ENCODE measurements at regions of chr17 and their contacts with region 1.

Region 1: DNA sequence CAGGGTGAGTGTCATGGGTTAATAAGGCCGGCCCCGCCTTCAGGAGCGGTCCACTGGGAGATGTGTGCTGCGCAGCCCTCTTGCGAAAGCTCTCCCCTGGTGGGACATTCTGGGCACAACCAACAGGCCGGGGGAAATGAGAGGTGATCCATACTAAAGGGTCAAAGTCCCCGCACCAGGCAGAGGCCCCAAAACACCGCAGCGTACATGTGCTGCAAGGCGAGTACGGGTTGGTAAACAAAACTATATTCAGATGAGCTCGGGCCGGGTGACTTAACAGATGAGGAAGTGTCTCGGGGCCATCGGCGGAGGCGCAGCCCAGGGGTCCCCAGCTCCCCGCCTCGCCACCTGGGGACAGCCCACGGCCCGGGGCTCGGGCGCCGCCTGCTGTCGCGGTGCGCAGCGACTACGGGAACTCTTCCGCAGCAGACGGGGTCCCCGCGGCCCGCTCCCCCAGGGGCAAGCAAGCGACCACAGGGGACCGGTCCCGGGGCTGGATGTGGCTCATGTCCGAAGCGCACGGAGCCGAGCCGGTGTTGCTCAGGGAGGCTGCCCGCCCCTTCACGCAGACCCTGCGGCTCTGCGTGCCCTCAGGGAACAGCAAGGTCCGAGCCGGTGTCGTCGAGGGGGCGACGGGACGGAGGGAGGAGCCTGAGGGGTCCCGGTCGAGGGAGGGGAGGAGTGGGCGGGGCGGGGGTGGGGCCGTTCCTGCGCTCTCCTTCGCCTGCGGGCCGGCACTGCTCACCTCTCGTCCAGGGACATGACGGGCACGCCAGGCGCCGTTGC is at the start of gene RAB37:
- DNase-seq: peak; percentile 82
- ATAC-seq: peak; percentile 80
- total RNA-seq, gene RAB37: 2.6 TPM

Region 2: GRCh38 chr17:74659898-74660297 is 76.8 kb before region 1 on chr17:
- intact Hi-C with region 1: loop called (anchors 5 kb)
- DNase-seq: no peak
- ATAC-seq: no peak

Region 3: DNA sequence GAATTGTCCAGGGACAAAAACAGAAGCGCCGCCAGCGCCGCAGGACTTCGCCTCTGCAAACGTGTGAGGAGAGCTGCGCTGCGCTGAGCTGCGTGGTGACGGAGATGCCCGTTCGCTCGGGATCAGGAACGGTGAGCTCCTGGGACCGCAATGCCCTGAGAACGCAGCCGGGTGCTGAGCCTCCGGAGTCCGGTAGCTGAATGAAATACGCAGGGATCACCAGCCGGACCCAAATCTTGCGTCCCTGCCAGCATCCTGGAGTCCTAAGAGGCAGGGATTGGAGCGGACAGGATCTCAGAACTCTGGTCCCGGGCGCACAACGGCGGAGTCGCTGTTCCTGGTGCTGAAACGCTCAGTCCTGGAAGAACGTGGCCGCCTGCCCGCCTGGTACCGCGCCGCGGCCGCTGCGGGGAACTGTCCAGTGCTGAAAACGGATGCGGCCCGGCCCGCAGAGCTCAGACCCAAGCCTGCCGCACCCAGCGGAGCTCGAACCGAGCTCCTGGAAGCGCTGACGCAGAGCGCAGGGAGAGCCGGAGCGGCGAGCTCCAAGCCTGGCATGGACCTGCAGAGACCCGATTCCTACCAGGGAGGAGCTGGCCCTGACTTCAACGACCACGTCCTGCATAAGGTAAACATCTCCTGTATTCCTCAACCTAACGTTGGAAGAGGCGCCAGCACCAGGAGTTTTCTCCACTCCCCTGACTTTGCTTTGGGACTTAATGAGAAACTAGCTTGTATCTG is 65.5 kb before region 1 on chr17:
- intact Hi-C with region 1: no loop called
- DNase-seq: peak; percentile 87
- ATAC-seq: peak; percentile 88

Region 4: GRCh38 chr17:74780443-74781238 is 43.9 kb after region 1 on chr17:
- intact Hi-C with region 1: no loop called
- DNase-seq: no peak
- ATAC-seq: no peak

Region 5: DNA sequence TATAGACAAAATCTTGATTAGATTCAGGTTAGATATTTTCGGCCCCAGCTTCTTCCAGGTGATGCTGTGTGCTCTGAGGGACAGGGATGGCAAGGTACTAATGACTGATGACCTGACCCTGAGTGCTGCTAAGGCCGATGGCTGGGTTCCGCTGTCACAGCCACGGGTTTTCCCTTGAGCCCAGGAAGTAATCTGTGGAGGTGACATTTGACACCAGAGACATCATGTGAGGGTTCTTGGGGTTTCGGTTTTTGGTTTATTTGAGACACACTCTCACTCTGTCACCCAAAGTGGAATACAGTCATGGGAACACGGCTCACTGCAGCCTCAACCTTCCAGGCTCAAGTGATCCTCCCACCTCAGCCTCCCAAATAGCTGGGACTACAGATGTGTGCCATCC is 208.8 kb after region 1 on chr17:
- intact Hi-C with region 1: no loop called
- DNase-seq: no peak
- ATAC-seq: no peak

Measured in Right ventricle myocardium inferior (tissue), 1 donor.